ENCODE measurements at regions of chr19 and their contacts with region 1.

Region 1: DNA sequence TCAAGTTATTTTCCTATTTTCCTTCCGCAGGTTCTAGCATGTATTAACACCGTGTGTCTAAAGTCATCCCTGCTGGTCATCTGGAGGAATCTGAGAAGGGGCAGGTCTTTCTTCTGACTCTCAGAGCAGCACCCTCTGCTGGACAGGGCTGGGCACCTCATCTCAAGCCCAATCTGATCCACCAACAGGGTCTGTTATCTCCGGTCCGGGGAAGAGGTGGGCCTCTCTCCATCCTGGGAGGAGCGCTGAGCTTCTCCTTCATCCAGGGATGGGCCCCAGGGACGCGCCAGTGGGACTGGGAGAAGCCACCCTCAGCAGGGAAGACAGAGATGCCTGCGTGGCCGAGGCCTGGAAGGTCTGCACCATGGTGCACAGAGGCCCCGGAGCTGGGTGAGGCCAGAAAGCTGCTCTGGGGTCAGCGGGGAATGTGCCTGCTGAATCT is 26.0 kb upstream of the ZNF331 start:
- DNase-seq: peak in 5 of 10 donors; percentile 32 to 88 (median 47)

Region 2: DNA sequence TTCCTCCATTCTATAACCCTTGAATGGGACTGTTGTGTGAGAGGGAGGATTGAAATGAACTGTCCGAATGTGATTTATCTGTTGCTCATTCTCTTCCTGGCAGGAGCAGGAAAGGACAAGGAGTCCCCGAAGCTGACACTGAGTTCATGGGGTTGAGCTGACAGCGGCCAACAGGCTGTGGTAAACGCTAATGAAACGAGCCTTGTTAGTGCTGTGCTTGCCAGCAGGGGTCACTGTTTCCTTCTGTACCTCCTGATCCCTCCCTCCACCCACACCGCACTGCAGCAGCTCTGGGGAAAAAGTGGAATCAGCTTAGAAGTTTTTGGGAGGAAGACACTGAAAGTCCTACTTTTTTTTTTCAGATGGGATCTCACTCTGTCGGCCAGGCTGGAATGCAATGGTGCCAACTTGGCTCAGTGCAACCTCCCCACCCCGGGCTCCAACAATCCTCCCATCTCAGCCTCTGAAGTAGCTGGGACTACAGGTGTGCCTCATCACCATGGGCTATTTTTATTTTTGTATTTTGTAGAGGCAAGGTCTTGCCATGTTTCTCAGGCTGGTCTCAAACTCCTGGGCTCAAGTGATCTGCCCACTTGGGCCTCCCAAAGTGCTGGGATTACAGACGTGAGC is 86.9 kb before region 1 on chr19:
- intact Hi-C with region 1: loop called (anchors 5 kb)
- DNase-seq: peak; percentile 45 to 95 (median 76)